ENCODE measurements at regions of chr9 and their contacts with region 1.

Region 1: GRCh38 chr9:72364679-72365524 is at the start of gene ZFAND5:
- DNase-seq: peak; percentile 97 to 99 (median 98)
- H3K4me3 ChIP-seq: peak within 1 kb of the TSS; percentile 55 to 97 (median 87)
- H3K27ac ChIP-seq: peak within 1 kb of the TSS; percentile 94 to 100 (median 100)
- H3K27me3 ChIP-seq: no peaks in the 10 kb centered on the region
- CTCF ChIP-seq: peak in 28 of 56 donors; percentile 4 to 51 (median 18)
- total RNA-seq, gene ZFAND5: 156 to 388 (median 286) TPM

Region 2: GRCh38 chr9:72292256-72292682 is 72.6 kb before region 1 on chr9:
- intact Hi-C with region 1: loop called (anchors 5 to 10 kb)
- DNase-seq: no peak
- H3K4me3 ChIP-seq: peak overlapping the region in 1 of 59 donors; percentile 3
- H3K27ac ChIP-seq: no peak overlapping the region
- H3K27me3 ChIP-seq: no peaks in the 10 kb centered on the region
- CTCF ChIP-seq: peak; percentile 59 to 89 (median 76)

Region 3: GRCh38 chr9:72485821-72486593 is 121.1 kb after region 1 on chr9:
- intact Hi-C with region 1: loop called in 1 of 2 experiments (anchors 10 kb)
- DNase-seq: no peak
- H3K4me3 ChIP-seq: no peak overlapping the region
- H3K27ac ChIP-seq: peak overlapping the region in 5 of 59 donors; percentile 2 to 64 (median 17)
- H3K27me3 ChIP-seq: no peaks in the 10 kb centered on the region
- CTCF ChIP-seq: no peak

Region 4: DNA sequence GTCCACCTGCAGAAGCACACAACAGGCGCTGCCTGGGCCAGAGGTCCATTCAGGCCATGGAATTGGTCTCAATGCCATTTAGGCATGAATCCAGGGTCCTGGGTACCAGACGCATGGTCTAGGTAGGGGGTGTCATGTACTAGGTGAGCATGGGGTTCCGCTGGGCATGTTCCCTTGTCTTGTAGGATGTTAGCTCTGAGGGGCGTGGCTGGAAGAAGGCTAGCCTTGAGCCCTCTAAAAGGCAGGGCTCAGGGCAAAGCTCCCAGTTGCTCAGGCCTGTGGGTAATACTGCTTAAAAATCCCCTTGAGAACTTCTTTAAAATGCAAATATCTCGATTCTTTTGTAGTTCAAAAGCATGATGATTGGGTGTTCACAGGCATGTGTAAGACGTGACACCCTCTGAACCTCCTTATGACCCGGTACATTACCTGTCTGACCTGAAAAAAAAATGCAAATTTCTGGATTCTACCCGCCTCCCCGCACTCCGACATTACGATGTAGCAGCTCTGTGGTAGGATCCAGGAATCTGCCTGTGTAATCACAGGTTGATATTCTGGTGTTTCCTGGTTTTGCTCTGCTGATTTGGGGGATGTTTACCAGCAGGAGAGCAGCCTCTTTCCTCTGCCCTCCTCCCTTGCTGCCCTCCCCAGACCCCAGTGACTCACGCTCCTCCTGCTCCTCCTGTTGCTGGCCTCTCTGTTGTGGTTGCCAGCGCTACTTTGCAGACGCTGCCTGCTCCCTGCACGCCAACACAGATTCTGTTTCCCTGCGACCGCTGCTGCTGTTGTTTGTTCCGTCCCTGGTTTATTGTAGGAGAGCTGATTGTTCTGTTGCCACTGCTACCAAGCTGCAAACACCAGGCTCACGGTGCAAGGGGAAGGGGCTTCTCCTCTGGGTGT is 162.2 kb after region 1 on chr9:
- intact Hi-C with region 1: loop called (anchors 1 to 5 kb)
- DNase-seq: peak; percentile 35 to 89 (median 74)
- H3K4me3 ChIP-seq: peak overlapping the region; percentile 8 to 67 (median 47)
- H3K27ac ChIP-seq: peak overlapping the region in 57 of 59 donors; percentile 4 to 88 (median 71)
- H3K27me3 ChIP-seq: no peaks in the 10 kb centered on the region
- CTCF ChIP-seq: peak in 5 of 56 donors; percentile 11 to 22 (median 14)

Region 5: DNA sequence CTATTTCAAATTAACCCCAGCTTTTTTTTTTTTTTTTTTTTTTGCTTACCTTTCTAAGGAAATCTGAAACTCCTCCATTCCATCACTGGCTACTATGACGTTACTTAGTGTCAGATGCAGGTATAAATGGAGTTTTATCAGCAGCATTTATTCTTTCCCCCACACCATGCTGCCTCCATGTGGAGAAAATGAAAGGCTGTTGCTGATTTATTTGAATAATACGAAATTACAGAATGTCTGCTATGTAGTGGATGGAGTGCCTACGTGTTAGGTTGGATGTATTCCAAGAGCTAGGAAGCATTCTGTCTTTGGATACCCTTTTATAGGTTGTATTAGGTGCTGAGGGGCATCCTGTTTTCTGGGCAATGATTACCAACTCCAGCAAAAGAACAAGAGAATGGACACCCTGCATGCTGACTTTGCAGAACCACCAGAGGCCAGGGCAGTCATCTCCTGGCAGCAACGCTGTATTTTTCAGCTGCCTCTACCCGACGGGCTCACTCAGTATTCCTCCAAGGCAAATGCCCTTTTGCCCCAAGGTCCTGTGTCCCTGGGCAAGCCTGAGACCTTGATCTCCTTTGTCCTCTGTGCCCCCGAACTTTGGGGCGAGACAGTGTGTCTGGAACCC is 388.5 kb after region 1 on chr9:
- intact Hi-C with region 1: loop called in 1 of 2 experiments (anchors 10 kb)
- DNase-seq: peak in 2 of 10 donors; percentile 11 to 27
- H3K4me3 ChIP-seq: no peak overlapping the region
- H3K27ac ChIP-seq: no peak overlapping the region
- H3K27me3 ChIP-seq: peaks cover 0 to under 1% (median 0%) of the 10 kb centered on the region in 45 donors
- CTCF ChIP-seq: peak in 53 of 56 donors; percentile 14 to 72 (median 51)